ENCODE measurements at regions of chr14 and their contacts with region 1.

Region 1: GRCh38 chr14:39247256-39247655 is 13.5 kb downstream of the MIA2 start:
- DNase-seq: peak; percentile 93
- ATAC-seq: peak; percentile 96
- H3K4me3 ChIP-seq: no peak overlapping the region
- H3K27ac ChIP-seq: no peak overlapping the region
- H3K4me1 ChIP-seq: no peaks in the 10 kb centered on the region; the same call in 1 of the 2 replicates
- H3K27me3 ChIP-seq: no peaks in the 10 kb centered on the region; the same call in 1 of the 2 replicates
- CTCF ChIP-seq: no peak
- POLR2A ChIP-seq: no peak
- RAD21 ChIP-seq: no peak

Region 2: GRCh38 chr14:39232554-39233415 is 14.5 kb before region 1 on chr14:
- CTCF ChIA-PET with region 1: no interaction called
- POLR2A ChIA-PET with region 1: no interaction called
- dilution Hi-C with region 1: no loop called
- in situ Hi-C with region 1: no loop called
- intact Hi-C with region 1: loop called (anchors 2 kb)
- DNase-seq: peak; percentile 78
- ATAC-seq: peak; percentile 98
- H3K4me3 ChIP-seq: no peak overlapping the region
- H3K27ac ChIP-seq: peak overlapping the region; percentile 65; the same call in 1 of the 2 replicates
- H3K4me1 ChIP-seq: peaks cover 1% of the 10 kb centered on the region; the same call in 1 of the 2 replicates
- H3K27me3 ChIP-seq: no peaks in the 10 kb centered on the region
- CTCF ChIP-seq: no peak
- POLR2A ChIP-seq: no peak
- RAD21 ChIP-seq: no peak